SK-N-SH (cell line): ENCODE measurements at regions of chr5 and their contacts with region 1.

Region 1: GRCh38 chr5:134577796-134578363 is 52.4 kb downstream of the JADE2 start:
- DNase-seq: peak; percentile 90
- H3K4me3 ChIP-seq: no peak overlapping the region; a peak in 1 of 4 replicates
- H3K27ac ChIP-seq: peak overlapping the region in 1 of 2 experiments; percentile 51; a peak in 3 of 4 replicates
- H3K4me1 ChIP-seq: peaks cover 6 to 20% of the 10 kb centered on the region in 2 experiments; a peak in 2 of 4 replicates
- H3K27me3 ChIP-seq: no peaks in the 10 kb centered on the region
- CTCF ChIP-seq: peak; percentile 90
- EP300 ChIP-seq: no peak
- RAD21 ChIP-seq: peak; percentile 95

Region 2: GRCh38 chr5:134511788-134512650 is 65.9 kb before region 1 on chr5:
- CTCF ChIA-PET with region 1: interaction called, 10 read pairs
- POLR2A ChIA-PET with region 1: no interaction called
- DNase-seq: no peak
- H3K4me3 ChIP-seq: no peak overlapping the region
- H3K27ac ChIP-seq: peak overlapping the region; percentile 29 to 36
- H3K4me1 ChIP-seq: peaks cover 24 to 25% of the 10 kb centered on the region in 2 experiments; a peak in 3 of 4 replicates
- H3K27me3 ChIP-seq: no peaks in the 10 kb centered on the region
- CTCF ChIP-seq: no peak
- EP300 ChIP-seq: no peak
- RAD21 ChIP-seq: peak; percentile 22; the same call in 1 of the 2 replicates

Region 3: DNA sequence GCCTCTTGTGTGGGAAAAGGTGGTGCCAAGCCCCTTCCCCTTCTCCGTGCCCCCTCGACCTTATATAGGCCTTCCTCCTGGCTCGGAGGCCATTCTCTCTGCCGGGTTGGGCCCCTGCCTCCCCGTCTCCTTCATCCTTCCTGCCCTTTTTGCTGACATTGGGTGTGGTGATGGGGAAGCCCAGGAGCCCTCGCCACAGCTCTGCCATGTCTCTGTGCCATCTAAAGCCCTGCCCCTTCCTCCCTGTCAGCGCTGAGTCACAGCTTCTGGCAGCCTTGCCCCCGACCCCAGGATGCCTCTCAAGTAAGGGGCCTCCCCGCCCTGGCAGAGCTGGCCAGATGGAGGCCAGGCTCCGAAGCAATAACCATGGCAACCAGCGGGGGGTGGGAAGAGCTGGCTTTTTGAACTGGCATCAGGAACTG is 22.0 kb before region 1 on chr5:
- CTCF ChIA-PET with region 1: interaction called, 17 read pairs
- POLR2A ChIA-PET with region 1: no interaction called
- DNase-seq: peak; percentile 90
- H3K4me3 ChIP-seq: no peak overlapping the region
- H3K27ac ChIP-seq: peak overlapping the region; percentile 89 to 98
- H3K4me1 ChIP-seq: peaks cover 51 to 60% of the 10 kb centered on the region in 2 experiments
- H3K27me3 ChIP-seq: no peaks in the 10 kb centered on the region
- CTCF ChIP-seq: peak; percentile 17; the same call in 1 of the 2 replicates
- EP300 ChIP-seq: peak in 1 of 2 experiments; percentile 54; a peak in 2 of 4 replicates
- RAD21 ChIP-seq: no peak; the same call in 1 of the 2 replicates

Region 4: DNA sequence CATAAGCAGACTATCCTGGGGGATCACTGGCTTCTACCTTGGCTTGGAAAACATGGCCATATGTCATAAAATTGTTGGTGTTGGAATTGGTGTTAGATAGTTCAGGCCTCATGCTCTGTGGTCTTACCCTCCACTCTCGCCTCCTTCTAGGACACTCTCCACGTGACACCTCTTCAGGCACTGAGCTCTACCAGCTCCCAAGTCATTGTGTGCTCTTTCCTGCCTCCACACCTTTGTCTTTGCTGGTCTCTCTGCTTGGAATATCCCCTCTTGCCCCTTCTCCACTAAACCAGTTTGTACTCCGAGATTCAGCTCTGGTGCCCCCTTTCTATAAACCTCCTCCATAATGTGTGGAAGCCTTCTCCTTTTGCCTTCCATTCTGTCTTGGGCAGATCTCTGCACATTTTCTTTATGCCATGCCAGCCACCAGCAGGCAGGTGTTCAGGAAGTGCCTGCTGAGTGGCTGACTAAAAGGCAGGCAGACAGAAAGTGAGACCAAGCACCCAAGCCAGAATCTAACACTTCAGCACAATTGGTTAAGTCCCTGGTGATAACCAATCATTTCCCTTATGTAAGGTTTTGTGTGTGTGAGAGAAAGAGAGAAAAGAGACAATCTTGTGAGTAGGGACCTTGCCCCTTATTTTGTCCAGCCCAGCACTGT is 17.0 kb after region 1 on chr5:
- CTCF ChIA-PET with region 1: interaction called, 14 read pairs
- POLR2A ChIA-PET with region 1: no interaction called
- DNase-seq: no peak
- H3K4me3 ChIP-seq: no peak overlapping the region
- H3K27ac ChIP-seq: no peak overlapping the region
- H3K4me1 ChIP-seq: no peaks in the 10 kb centered on the region
- H3K27me3 ChIP-seq: no peaks in the 10 kb centered on the region
- CTCF ChIP-seq: no peak
- EP300 ChIP-seq: no peak
- RAD21 ChIP-seq: no peak

Region 5: GRCh38 chr5:134648425-134649162 is 70.7 kb after region 1 on chr5 and contains the start of gene SEC24A:
- CTCF ChIA-PET with region 1: no interaction called
- POLR2A ChIA-PET with region 1: no interaction called
- DNase-seq: peak; percentile 96
- H3K4me3 ChIP-seq: peak within 1 kb of the TSS; percentile 75 to 99
- H3K27ac ChIP-seq: peak within 1 kb of the TSS; percentile 83 to 95
- H3K4me1 ChIP-seq: peaks cover 0 to 6% of the 10 kb centered on the region in 2 experiments; a peak in 2 of 4 replicates
- H3K27me3 ChIP-seq: no peaks in the 10 kb centered on the region
- CTCF ChIP-seq: no peak
- EP300 ChIP-seq: no peak
- RAD21 ChIP-seq: no peak
- polyA plus RNA-seq, gene SEC24A: 7.4 and 9.9 TPM in 2 replicates